Caco-2 (cell line): ENCODE measurements at regions of chr7 and their contacts with region 1.

Region 1: GRCh38 chr7:135170274-135170997 is at the start of gene CYREN:
- DNase-seq: peak; percentile 95 to 97
- H3K4me3 ChIP-seq: peak within 1 kb of the TSS; percentile 98
- H3K4me3 Mint-ChIP-seq: peak within 1 kb of the TSS; percentile 85
- H3K27ac Mint-ChIP-seq: peak within 1 kb of the TSS; percentile 94
- H3K4me1 ChIP-seq: peaks cover 12% of the 10 kb centered on the region; the same call in 1 of the 2 replicates
- H3K4me1 Mint-ChIP-seq: peaks cover 24% of the 10 kb centered on the region
- H3K27me3 ChIP-seq: no peaks in the 10 kb centered on the region
- H3K27me3 Mint-ChIP-seq: no peaks in the 10 kb centered on the region
- CTCF ChIP-seq: peak; percentile 59 to 84
- total RNA-seq, gene CYREN: 60.9 and 62.6 TPM in 2 replicates

Region 2: DNA sequence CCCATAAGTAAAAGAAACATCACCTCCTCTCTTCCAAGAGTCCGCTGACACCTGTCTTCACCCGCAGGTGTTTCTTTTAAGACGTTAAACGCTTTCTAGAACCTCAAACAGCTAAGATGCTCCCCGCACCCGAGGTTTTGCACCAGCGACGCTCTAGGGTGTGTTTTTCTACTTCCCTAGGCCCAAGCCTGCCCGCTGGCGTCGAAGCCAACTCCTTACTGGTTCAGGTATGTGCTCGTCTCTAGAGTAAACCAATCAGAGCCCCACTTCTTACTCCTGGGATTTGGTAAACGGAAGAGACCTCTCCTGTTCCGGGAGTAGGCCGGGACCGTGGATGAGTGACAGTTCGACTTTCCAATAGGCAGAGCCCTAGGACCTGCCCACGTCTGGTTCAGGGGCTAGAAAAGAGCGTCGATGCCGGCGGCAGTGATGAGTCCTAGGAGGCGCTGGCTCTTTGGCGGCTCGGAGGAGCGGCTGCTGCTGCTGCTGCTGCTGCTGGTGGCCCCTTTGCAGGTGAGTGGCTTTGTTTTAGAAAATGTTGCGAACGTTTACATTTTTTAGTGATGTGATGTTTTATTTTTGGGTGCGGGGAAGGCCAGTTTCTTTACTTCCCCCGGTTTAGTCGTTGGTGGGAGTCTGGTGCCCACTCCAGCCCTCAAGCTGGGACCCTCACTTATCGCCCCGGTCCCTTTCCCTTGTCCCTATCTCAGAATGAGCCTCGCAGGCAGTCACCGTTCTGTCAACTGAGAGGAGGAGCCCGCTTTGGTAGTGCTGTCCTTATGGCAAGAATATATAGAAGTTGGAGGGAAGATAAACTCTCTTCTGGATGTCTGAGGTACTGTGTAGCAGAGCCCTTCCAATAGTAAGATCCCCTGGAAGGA is 523.8 kb before region 1 on chr7 and contains the start of gene BPGM:
- CTCF ChIA-PET with region 1: no interaction called
- POLR2A ChIA-PET with region 1: no interaction called
- intact Hi-C with region 1: loop called (anchors 5 kb)
- DNase-seq: peak; percentile 99 to 100
- H3K4me3 ChIP-seq: peak within 1 kb of the TSS; percentile 64
- H3K4me3 Mint-ChIP-seq: no peak within 1 kb of the TSS
- H3K27ac Mint-ChIP-seq: no peak within 1 kb of the TSS
- H3K4me1 ChIP-seq: 0 out of 2 replicates have a peak, but pooled peaks cover 4% of the 10 kb centered on the region
- H3K4me1 Mint-ChIP-seq: peaks cover 4% of the 10 kb centered on the region
- H3K27me3 ChIP-seq: no peaks in the 10 kb centered on the region
- H3K27me3 Mint-ChIP-seq: no peaks in the 10 kb centered on the region
- CTCF ChIP-seq: peak in 1 of 2 experiments; percentile 38
- total RNA-seq, gene BPGM: 7.2 and 8.1 TPM in 2 replicates

Region 3: GRCh38 chr7:134986363-134987251 is 183.8 kb before region 1 on chr7 and contains the start of gene AGBL3:
- CTCF ChIA-PET with region 1: interaction called, 8 read pairs
- POLR2A ChIA-PET with region 1: no interaction called
- intact Hi-C with region 1: loop called (anchors 1 kb)
- DNase-seq: peak; percentile 97 to 98
- H3K4me3 ChIP-seq: peak within 1 kb of the TSS; percentile 81
- H3K4me3 Mint-ChIP-seq: peak within 1 kb of the TSS; percentile 99
- H3K27ac Mint-ChIP-seq: peak within 1 kb of the TSS; percentile 100
- H3K4me1 ChIP-seq: peaks cover 35% of the 10 kb centered on the region
- H3K4me1 Mint-ChIP-seq: peaks cover 20% of the 10 kb centered on the region
- H3K27me3 ChIP-seq: no peaks in the 10 kb centered on the region
- H3K27me3 Mint-ChIP-seq: no peaks in the 10 kb centered on the region
- CTCF ChIP-seq: peak; percentile 72 to 78
- total RNA-seq, gene AGBL3: 5.3 and 6.1 TPM in 2 replicates

Region 4: DNA sequence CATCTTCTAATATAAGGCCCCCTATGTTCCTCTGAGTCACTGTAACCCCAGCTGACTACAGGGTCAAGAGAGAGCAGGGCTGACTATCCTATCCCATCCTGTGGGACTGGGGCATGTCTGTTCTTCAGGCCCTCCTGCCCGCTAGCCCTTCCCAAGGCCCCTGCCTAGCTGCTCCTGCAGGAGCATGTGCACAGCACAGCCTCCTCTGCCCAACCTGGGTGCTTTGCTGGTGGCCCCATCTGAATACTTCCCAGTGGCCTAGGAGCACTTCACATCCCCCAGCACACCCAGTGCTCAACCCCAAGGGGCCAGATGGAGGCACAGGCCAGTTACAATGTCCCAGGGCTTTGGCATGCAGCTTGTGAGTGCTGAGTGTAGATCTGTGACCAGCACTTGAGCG is 146.8 kb before region 1 on chr7:
- CTCF ChIA-PET with region 1: no interaction called
- POLR2A ChIA-PET with region 1: no interaction called
- intact Hi-C with region 1: no loop called
- DNase-seq: no peak
- H3K4me3 ChIP-seq: no peak overlapping the region
- H3K4me3 Mint-ChIP-seq: no peak overlapping the region
- H3K27ac Mint-ChIP-seq: no peak overlapping the region
- H3K4me1 ChIP-seq: no peaks in the 10 kb centered on the region
- H3K4me1 Mint-ChIP-seq: no peaks in the 10 kb centered on the region
- H3K27me3 ChIP-seq: no peaks in the 10 kb centered on the region
- H3K27me3 Mint-ChIP-seq: no peaks in the 10 kb centered on the region
- CTCF ChIP-seq: no peak

Region 5: GRCh38 chr7:135129580-135129979 is 40.9 kb before region 1 on chr7:
- CTCF ChIA-PET with region 1: no interaction called
- POLR2A ChIA-PET with region 1: no interaction called
- intact Hi-C with region 1: no loop called
- DNase-seq: no peak
- H3K4me3 ChIP-seq: no peak overlapping the region
- H3K4me3 Mint-ChIP-seq: no peak overlapping the region
- H3K27ac Mint-ChIP-seq: no peak overlapping the region
- H3K4me1 ChIP-seq: no peaks in the 10 kb centered on the region
- H3K4me1 Mint-ChIP-seq: no peaks in the 10 kb centered on the region
- H3K27me3 ChIP-seq: no peaks in the 10 kb centered on the region
- H3K27me3 Mint-ChIP-seq: no peaks in the 10 kb centered on the region
- CTCF ChIP-seq: no peak

Region 6: DNA sequence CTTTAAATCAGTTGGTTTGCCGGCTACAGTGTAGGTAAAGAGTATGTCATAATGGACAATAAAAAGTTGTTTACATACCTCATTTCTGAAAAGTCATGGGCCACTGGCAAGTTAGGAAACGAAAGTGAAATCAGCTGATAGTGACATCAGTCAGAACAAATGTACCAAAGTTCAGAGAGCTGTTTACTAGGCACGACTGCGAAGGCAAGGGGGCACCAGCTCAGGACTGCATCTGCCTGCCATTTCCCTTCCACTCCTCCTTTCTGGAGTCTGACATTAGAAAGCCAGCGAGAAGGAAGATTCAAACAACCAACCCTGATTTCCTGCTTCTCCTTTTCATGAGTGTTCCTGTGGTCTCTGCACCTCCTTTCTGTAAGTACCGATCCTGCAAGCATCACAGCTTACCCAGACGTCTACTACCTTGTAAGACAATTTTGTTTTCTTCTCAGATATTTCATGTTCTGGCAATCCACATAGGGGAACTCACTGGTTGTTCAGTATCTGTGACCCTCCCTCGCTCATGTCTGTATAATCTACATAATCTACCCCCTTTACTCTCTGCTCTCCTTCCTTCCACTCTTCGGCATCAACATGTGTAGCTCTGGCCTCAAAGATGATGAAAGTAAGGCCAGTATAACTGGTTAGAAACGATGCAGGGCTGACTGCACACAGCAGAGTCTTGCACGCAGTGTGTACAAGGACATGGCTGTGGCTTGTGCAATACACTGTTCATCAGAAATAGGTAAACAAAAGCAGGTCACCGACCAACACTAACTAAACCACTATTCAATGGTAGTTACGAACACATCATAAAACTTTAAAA is 22.3 kb before region 1 on chr7 and contains the start of gene TMEM140:
- CTCF ChIA-PET with region 1: no interaction called
- POLR2A ChIA-PET with region 1: no interaction called
- intact Hi-C with region 1: loop called (anchors 1 kb)
- DNase-seq: peak; percentile 63 to 74
- H3K4me3 ChIP-seq: peak within 1 kb of the TSS; percentile 33
- H3K4me3 Mint-ChIP-seq: peak within 1 kb of the TSS; percentile 79
- H3K27ac Mint-ChIP-seq: peak within 1 kb of the TSS; percentile 86
- H3K4me1 ChIP-seq: peaks cover 14% of the 10 kb centered on the region
- H3K4me1 Mint-ChIP-seq: peaks cover 21% of the 10 kb centered on the region
- H3K27me3 ChIP-seq: no peaks in the 10 kb centered on the region
- H3K27me3 Mint-ChIP-seq: no peaks in the 10 kb centered on the region
- CTCF ChIP-seq: no peak
- total RNA-seq, gene TMEM140: 3.8 and 6.1 TPM in 2 replicates

Region 7: GRCh38 chr7:135251496-135252391 is 81.3 kb after region 1 on chr7:
- CTCF ChIA-PET with region 1: no interaction called
- POLR2A ChIA-PET with region 1: no interaction called
- intact Hi-C with region 1: no loop called
- DNase-seq: no peak
- H3K4me3 ChIP-seq: no peak overlapping the region
- H3K4me3 Mint-ChIP-seq: no peak overlapping the region
- H3K27ac Mint-ChIP-seq: no peak overlapping the region
- H3K4me1 ChIP-seq: peaks cover 14% of the 10 kb centered on the region; the same call in 1 of the 2 replicates
- H3K4me1 Mint-ChIP-seq: peaks cover 8% of the 10 kb centered on the region
- H3K27me3 ChIP-seq: no peaks in the 10 kb centered on the region
- H3K27me3 Mint-ChIP-seq: no peaks in the 10 kb centered on the region
- CTCF ChIP-seq: no peak